Caco-2 (cell line): ENCODE measurements at regions of chr10 and their contacts with region 1.

Region 1: GRCh38 chr10:102713814-102714620 is at the start of gene ARL3:
- DNase-seq: peak; percentile 98 to 99
- H3K4me3 ChIP-seq: peak within 1 kb of the TSS; percentile 85
- H3K4me3 Mint-ChIP-seq: peak within 1 kb of the TSS; percentile 87
- H3K27ac Mint-ChIP-seq: peak within 1 kb of the TSS; percentile 82
- H3K4me1 ChIP-seq: peaks cover 13% of the 10 kb centered on the region
- H3K4me1 Mint-ChIP-seq: peaks cover 30% of the 10 kb centered on the region
- H3K27me3 ChIP-seq: no peaks in the 10 kb centered on the region
- H3K27me3 Mint-ChIP-seq: no peaks in the 10 kb centered on the region
- CTCF ChIP-seq: peak in 1 of 2 experiments; percentile 54
- total RNA-seq, gene ARL3: 7.8 and 8.0 TPM in 2 replicates

Region 2: GRCh38 chr10:102286216-102286615 is 427.8 kb before region 1 on chr10:
- CTCF ChIA-PET with region 1: no interaction called
- POLR2A ChIA-PET with region 1: no interaction called
- intact Hi-C with region 1: no loop called
- DNase-seq: no peak
- H3K4me3 ChIP-seq: no peak overlapping the region
- H3K4me3 Mint-ChIP-seq: no peak overlapping the region
- H3K27ac Mint-ChIP-seq: no peak overlapping the region
- H3K4me1 ChIP-seq: no peaks in the 10 kb centered on the region
- H3K4me1 Mint-ChIP-seq: peaks cover 9% of the 10 kb centered on the region
- H3K27me3 ChIP-seq: no peaks in the 10 kb centered on the region
- H3K27me3 Mint-ChIP-seq: no peaks in the 10 kb centered on the region
- CTCF ChIP-seq: no peak

Region 3: GRCh38 chr10:102660888-102661657 is 52.9 kb before region 1 on chr10:
- CTCF ChIA-PET with region 1: interaction called, 6 read pairs
- POLR2A ChIA-PET with region 1: interaction called, 12 read pairs
- intact Hi-C with region 1: no loop called
- DNase-seq: no peak
- H3K4me3 ChIP-seq: no peak overlapping the region
- H3K4me3 Mint-ChIP-seq: no peak overlapping the region
- H3K27ac Mint-ChIP-seq: no peak overlapping the region
- H3K4me1 ChIP-seq: no peaks in the 10 kb centered on the region
- H3K4me1 Mint-ChIP-seq: no peaks in the 10 kb centered on the region
- H3K27me3 ChIP-seq: no peaks in the 10 kb centered on the region
- H3K27me3 Mint-ChIP-seq: no peaks in the 10 kb centered on the region
- CTCF ChIP-seq: no peak

Region 4: GRCh38 chr10:102678842-102679289 is 35.2 kb before region 1 on chr10:
- CTCF ChIA-PET with region 1: interaction called, 21 read pairs
- POLR2A ChIA-PET with region 1: no interaction called
- intact Hi-C with region 1: loop called (anchors 2 kb)
- DNase-seq: peak; percentile 77 to 81
- H3K4me3 ChIP-seq: no peak overlapping the region
- H3K4me3 Mint-ChIP-seq: peak overlapping the region; percentile 29
- H3K27ac Mint-ChIP-seq: no peak overlapping the region
- H3K4me1 ChIP-seq: no peaks in the 10 kb centered on the region; the same call in 1 of the 2 replicates
- H3K4me1 Mint-ChIP-seq: no peaks in the 10 kb centered on the region
- H3K27me3 ChIP-seq: no peaks in the 10 kb centered on the region
- H3K27me3 Mint-ChIP-seq: no peaks in the 10 kb centered on the region
- CTCF ChIP-seq: peak; percentile 83 to 94

Region 5: GRCh38 chr10:102743588-102744373 is 29.8 kb after region 1 on chr10 and contains the start of gene WBP1L:
- CTCF ChIA-PET with region 1: interaction called, 8 read pairs
- POLR2A ChIA-PET with region 1: interaction called, 7 read pairs
- intact Hi-C with region 1: loop called (anchors 2 kb)
- DNase-seq: peak; percentile 98
- H3K4me3 ChIP-seq: peak within 1 kb of the TSS; percentile 76
- H3K4me3 Mint-ChIP-seq: peak within 1 kb of the TSS; percentile 75
- H3K27ac Mint-ChIP-seq: peak within 1 kb of the TSS; percentile 74
- H3K4me1 ChIP-seq: peaks cover 18% of the 10 kb centered on the region
- H3K4me1 Mint-ChIP-seq: peaks cover 7% of the 10 kb centered on the region
- H3K27me3 ChIP-seq: no peaks in the 10 kb centered on the region
- H3K27me3 Mint-ChIP-seq: no peaks in the 10 kb centered on the region
- CTCF ChIP-seq: no peak
- total RNA-seq, gene WBP1L: 26.3 and 28.2 TPM in 2 replicates